Activated naive CD4-positive, alpha-beta T cell treated with anti-CD3 and anti-CD28 coated beads for 36 hours (primary cell): ENCODE measurements at regions of chr6 and their contacts with region 1.

Region 1: DNA sequence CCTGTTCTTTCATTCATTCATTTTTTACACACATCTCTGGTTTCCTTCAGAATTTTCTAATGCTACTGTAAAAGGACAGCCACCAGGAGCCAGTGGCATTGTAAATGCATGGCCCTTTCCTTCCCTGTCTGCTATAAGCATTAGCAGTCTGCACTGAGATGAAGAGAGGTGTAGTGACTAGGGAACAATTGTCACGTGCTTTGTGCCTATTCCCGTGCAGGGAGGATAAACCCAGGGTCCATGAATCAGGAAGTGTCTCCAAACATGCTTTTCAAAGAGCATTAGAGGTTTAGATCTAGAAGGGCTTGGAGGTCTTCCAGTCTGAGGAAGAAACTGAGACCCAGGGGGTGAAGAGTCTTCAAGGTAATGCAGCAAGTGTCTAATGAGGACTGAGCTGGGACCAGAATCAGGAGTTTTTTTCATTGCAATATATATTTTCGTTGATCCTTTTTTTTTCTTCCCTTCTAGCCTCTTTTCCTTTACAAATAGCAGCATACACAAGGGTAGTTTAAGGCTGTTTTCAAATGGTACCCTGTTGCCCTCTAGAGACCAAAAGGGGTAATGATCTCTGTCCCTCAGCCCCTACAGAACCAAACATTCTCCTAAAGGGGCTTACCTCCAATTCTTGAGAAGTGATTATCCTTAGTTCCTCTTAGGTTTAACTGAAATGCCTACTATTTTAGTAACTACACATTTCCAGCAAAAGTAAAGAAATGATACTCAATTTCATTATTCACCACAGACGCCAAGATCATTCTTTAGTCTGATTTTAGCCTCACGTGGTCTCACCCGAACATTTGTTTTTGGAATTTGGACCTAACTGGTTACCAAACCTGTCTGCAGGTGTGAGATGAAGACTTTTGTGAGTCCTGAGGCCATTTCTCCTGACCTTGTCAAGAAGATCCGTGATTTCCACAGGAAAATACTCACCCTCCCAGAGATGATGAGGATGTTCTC is 6.6 kb downstream of the TRIM15 start:
- DNase-seq: peak; percentile 26
- H3K4me3 Mint-ChIP-seq: no peak overlapping the region
- H3K27ac Mint-ChIP-seq: no peak overlapping the region
- H3K4me1 Mint-ChIP-seq: peaks cover 21% of the 10 kb centered on the region
- H3K27me3 Mint-ChIP-seq: peaks cover 43% of the 10 kb centered on the region

Region 2: GRCh38 chr6:30013291-30013922 is 156.5 kb before region 1 on chr6:
- CTCF ChIA-PET with region 1: no interaction called
- intact Hi-C with region 1: loop called (anchors 10 kb)
- DNase-seq: peak; percentile 62
- H3K4me3 Mint-ChIP-seq: no peak overlapping the region
- H3K27ac Mint-ChIP-seq: no peak overlapping the region
- H3K4me1 Mint-ChIP-seq: no peaks in the 10 kb centered on the region
- H3K27me3 Mint-ChIP-seq: peaks cover 6% of the 10 kb centered on the region

Region 3: GRCh38 chr6:30037182-30037788 is 132.7 kb before region 1 on chr6:
- CTCF ChIA-PET with region 1: no interaction called
- intact Hi-C with region 1: no loop called
- DNase-seq: no peak
- H3K4me3 Mint-ChIP-seq: no peak overlapping the region
- H3K27ac Mint-ChIP-seq: no peak overlapping the region
- H3K4me1 Mint-ChIP-seq: no peaks in the 10 kb centered on the region
- H3K27me3 Mint-ChIP-seq: no peaks in the 10 kb centered on the region

Region 4: GRCh38 chr6:30424549-30424948 is 254.6 kb after region 1 on chr6:
- CTCF ChIA-PET with region 1: no interaction called
- intact Hi-C with region 1: no loop called
- DNase-seq: no peak
- H3K4me3 Mint-ChIP-seq: no peak overlapping the region
- H3K27ac Mint-ChIP-seq: no peak overlapping the region
- H3K4me1 Mint-ChIP-seq: no peaks in the 10 kb centered on the region
- H3K27me3 Mint-ChIP-seq: peaks cover 46% of the 10 kb centered on the region

Region 5: DNA sequence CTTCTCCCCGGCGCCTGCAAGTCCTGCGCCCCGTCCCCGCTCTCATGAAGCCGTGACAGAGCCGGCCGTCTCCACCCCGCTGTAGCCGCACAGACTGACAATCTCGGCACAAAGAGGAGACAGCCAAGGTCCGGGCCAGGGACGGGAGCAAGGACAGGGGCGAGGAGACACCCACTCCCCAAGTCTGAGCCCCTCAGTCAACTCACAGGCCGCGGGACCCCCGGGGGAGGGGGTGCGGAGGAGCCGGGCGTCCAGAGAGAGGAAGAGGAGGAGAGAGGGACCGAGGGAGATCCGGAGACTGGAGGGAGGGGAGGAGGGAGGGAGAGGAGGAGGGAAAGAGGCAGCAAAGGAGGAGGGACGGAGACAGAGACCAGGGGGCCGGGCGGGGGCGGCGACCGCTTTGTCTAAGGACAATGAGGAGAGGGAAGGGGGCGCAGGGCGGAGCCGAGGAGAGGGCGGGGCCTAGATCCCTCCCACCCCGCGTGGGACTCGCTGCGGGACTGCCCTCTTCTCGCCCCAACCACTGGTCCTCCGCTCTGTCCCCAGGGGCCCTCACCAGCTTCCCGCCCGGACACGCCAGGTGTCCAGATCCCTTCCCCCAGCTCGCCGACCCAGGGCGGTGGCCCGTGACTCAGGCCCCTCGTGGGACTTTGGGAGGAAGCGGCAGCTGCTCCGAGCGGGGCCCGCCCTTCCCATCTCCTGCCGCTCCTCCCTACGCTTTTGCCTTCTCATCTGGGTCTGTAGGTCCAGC is 517.1 kb after region 1 on chr6:
- CTCF ChIA-PET with region 1: no interaction called
- intact Hi-C with region 1: no loop called
- DNase-seq: peak; percentile 77
- H3K4me3 Mint-ChIP-seq: peak overlapping the region; percentile 96
- H3K27ac Mint-ChIP-seq: peak overlapping the region; percentile 100
- H3K4me1 Mint-ChIP-seq: peaks cover 36% of the 10 kb centered on the region
- H3K27me3 Mint-ChIP-seq: no peaks in the 10 kb centered on the region